ENCODE measurements at regions of chr17 and their contacts with region 1.

Region 1: DNA sequence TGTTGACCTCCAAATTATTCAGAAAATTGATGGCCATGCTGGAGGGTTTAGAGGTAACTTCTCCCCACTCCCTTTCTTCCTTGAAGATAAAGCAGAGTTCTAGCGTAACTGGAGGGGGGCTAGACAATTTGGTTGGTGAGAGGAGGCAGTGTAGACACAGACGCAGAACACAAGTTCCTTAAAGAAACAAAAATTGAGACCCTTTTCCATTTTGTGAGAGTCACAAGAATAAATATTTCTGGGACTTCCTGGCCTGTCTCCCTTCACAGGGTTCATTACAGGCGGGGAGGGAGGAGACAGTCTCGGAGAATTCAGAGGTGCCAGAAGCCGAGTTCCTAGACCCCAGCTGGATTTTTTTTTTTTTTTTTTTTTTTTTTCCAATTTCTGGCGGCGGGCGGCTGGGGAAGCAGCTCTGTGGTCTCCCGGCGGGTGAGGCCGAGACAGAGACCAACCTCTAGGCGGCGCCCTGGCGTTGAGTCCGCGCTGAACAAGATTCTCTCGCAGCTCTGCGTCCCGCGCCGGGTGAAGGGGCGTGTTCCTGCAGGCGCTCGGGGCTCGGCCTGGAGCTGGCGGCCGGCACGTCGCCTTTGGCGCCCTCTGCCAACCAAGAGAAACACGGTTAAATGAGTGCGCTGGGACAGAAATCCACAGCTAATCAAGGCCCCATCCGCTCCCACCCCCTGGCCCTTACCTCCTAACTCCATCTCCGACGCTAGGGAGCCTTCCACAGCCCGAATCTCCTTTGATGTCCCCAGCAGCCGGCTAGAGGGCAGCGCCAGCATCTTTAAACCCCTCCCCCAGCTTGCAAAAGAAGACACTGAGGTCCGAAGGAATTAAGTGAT is 10.2 kb upstream of the HOXB9 start:
- DNase-seq: peak; percentile 95 to 97
- ATAC-seq: peak; percentile 85 to 95
- H3K4me3 ChIP-seq: no peak overlapping the region
- H3K27ac ChIP-seq: peak overlapping the region; percentile 53 to 74
- H3K4me1 ChIP-seq: peaks cover 48% of the 10 kb centered on the region
- CTCF ChIP-seq: peak; percentile 93
- EP300 ChIP-seq: no peak
- POLR2A ChIP-seq: no peak
- RAD21 ChIP-seq: peak; percentile 41 to 49; a peak in 4 of 5 replicates

Region 2: DNA sequence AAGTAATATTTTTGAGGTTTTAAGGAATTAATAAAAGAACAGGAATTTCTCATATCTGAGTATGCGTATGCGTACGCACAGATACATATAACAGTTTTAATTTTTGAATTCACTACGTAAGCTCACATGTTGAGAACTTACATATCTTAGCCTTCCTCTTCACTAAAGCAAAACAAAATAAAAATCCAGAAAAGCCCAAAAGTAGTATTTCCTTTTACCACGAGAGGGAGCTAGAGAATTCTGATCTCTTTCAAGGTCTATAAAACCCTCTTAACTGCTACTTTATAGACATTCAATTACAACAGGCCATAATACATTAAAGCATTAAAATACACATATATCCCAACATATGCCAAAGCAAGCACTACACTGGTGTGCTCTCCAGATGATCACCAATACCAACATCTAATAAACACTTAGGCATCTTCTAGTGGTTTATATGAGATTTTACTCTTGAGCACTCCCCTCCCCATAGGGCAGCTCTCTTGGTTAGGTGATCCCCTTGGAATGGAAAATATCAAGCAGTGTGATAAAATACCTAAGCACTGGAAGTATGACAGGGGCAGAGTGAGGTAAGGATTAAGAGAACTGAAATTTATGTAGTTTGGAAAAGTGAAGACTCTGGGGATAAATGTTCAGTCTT is 300.4 kb before region 1 on chr17:
- CTCF ChIA-PET with region 1: interaction called, 10 read pairs
- POLR2A ChIA-PET with region 1: no interaction called
- DNase-seq: peak; percentile 35 to 68
- ATAC-seq: peak; percentile 71 to 74; a peak in 5 of 6 replicates
- H3K4me3 ChIP-seq: no peak overlapping the region
- H3K27ac ChIP-seq: no peak overlapping the region
- H3K4me1 ChIP-seq: peaks cover 17% of the 10 kb centered on the region
- CTCF ChIP-seq: peak; percentile 94
- EP300 ChIP-seq: no peak
- POLR2A ChIP-seq: no peak
- RAD21 ChIP-seq: peak; percentile 75 to 79

Region 3: GRCh38 chr17:48457080-48457836 is 179.1 kb before region 1 on chr17:
- CTCF ChIA-PET with region 1: no interaction called
- POLR2A ChIA-PET with region 1: no interaction called
- DNase-seq: peak; percentile 69 to 75
- ATAC-seq: peak; percentile 84 to 97
- H3K4me3 ChIP-seq: peak overlapping the region; percentile 30; the same call in 2 of the 3 replicates
- H3K27ac ChIP-seq: no peak overlapping the region
- H3K4me1 ChIP-seq: peaks cover 8% of the 10 kb centered on the region; the same call in 2 of the 3 replicates
- CTCF ChIP-seq: peak; percentile 97
- EP300 ChIP-seq: no peak
- POLR2A ChIP-seq: no peak
- RAD21 ChIP-seq: peak; percentile 69 to 75

Region 4: GRCh38 chr17:48492401-48493298 is 143.7 kb before region 1 on chr17:
- CTCF ChIA-PET with region 1: no interaction called
- POLR2A ChIA-PET with region 1: no interaction called
- DNase-seq: peak; percentile 66 to 85
- ATAC-seq: peak; percentile 96 to 98
- H3K4me3 ChIP-seq: peak overlapping the region; percentile 25
- H3K27ac ChIP-seq: peak overlapping the region; percentile 43 to 72
- H3K4me1 ChIP-seq: peaks cover 14% of the 10 kb centered on the region; the same call in 2 of the 3 replicates
- CTCF ChIP-seq: peak; percentile 92
- EP300 ChIP-seq: no peak
- POLR2A ChIP-seq: no peak
- RAD21 ChIP-seq: peak; percentile 83 to 96

Region 5: GRCh38 chr17:48528153-48528935 is 108.1 kb before region 1 on chr17:
- CTCF ChIA-PET with region 1: no interaction called
- POLR2A ChIA-PET with region 1: no interaction called
- DNase-seq: no peak
- ATAC-seq: no peak
- H3K4me3 ChIP-seq: no peak overlapping the region
- H3K27ac ChIP-seq: no peak overlapping the region
- H3K4me1 ChIP-seq: peaks cover 2% of the 10 kb centered on the region
- CTCF ChIP-seq: no peak
- EP300 ChIP-seq: no peak
- POLR2A ChIP-seq: no peak
- RAD21 ChIP-seq: no peak

Region 6: DNA sequence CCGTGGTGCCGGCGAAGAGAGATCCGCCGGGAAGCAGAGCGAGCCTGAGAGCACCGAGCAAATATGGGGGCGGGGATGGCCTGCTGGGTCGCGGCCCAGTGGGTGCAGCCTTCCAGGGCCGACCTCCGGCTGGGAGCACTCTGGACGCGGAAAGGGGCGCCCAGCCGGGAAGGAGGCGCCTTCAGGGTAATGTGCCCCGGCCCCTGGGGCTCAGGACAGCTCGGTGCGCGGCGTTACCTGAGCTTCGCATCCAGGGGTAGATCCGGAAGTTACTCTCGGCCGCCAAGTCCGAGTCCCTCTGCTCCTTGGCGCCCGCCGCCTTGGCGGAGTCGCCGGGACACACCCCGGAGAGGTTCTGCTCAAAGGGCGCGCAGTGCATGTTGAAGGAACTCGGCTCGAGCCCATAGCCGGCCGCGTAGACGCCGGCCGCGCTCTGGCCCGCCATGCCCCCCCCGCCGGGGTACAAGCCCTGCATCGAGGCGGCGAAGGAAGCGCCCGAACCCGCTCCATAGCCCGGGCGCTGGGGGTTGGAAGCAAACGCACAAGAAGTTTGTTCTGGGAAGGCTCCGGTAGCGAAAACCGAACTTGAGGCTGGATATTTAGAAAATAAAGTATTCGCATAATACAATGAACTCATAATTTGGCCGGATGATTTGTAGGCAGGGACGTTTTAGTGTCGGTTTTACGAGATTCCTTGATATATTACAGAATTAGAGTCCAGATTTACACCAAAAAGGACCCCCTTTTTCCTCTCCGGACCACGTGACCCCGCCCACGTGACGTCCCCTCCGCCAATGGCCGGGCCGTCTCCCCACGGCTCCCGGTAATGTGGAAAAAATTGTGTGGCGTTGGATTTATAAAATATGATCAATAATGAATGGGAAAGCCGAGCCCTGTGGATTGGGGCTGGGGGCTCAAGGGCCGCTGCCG is 25.9 kb before region 1 on chr17 and contains the start of gene HOXB7:
- CTCF ChIA-PET with region 1: interaction called, 22 read pairs
- POLR2A ChIA-PET with region 1: interaction called, 6 read pairs
- DNase-seq: peak; percentile 75 to 91
- ATAC-seq: peak; percentile 11 to 59; a peak in 3 of 6 replicates
- H3K4me3 ChIP-seq: peak within 1 kb of the TSS; percentile 74
- H3K27ac ChIP-seq: peak within 1 kb of the TSS; percentile 93 to 99
- H3K4me1 ChIP-seq: peaks cover 16% of the 10 kb centered on the region
- CTCF ChIP-seq: no peak
- EP300 ChIP-seq: no peak
- POLR2A ChIP-seq: peak; percentile 66
- RAD21 ChIP-seq: no peak
- polyA plus RNA-seq, gene HOXB7: 15.4 and 22.3 TPM in 2 replicates

Region 7: GRCh38 chr17:48625495-48626244 is 10.7 kb before region 1 on chr17:
- CTCF ChIA-PET with region 1: interaction called, 118 read pairs
- POLR2A ChIA-PET with region 1: interaction called, 45 read pairs
- DNase-seq: peak; percentile 66 to 84
- ATAC-seq: peak; percentile 66 to 82
- H3K4me3 ChIP-seq: peak overlapping the region; percentile 72
- H3K27ac ChIP-seq: peak overlapping the region; percentile 89 to 95
- H3K4me1 ChIP-seq: peaks cover 15% of the 10 kb centered on the region; the same call in 2 of the 3 replicates
- CTCF ChIP-seq: no peak
- EP300 ChIP-seq: peak in 1 of 2 experiments; percentile 9; a peak in 1 of 5 replicates
- POLR2A ChIP-seq: peak; percentile 45
- RAD21 ChIP-seq: no peak

Region 8: DNA sequence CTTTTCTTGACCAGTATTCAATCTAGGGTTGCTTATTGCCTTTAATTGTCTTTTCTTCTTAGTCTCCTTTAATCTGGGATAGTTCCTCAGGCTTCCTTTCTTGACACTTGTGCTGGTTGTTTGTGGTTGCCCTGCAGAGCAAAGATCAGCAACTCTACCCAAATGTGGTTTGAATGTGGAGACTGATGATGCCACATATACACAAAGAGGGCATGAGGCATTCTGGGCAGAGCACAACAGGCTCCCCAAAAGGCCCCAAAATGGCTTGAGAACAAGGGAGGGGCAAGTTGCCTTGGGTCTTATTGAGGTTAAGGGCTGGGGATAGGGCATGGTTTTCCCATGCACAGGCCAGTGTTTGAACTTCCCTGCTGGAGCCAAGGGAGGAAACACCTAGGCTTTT is 19.5 kb after region 1 on chr17:
- CTCF ChIA-PET with region 1: interaction called, 37 read pairs
- POLR2A ChIA-PET with region 1: interaction called, 4 read pairs
- DNase-seq: no peak
- ATAC-seq: no peak
- H3K4me3 ChIP-seq: no peak overlapping the region
- H3K27ac ChIP-seq: no peak overlapping the region
- H3K4me1 ChIP-seq: no peaks in the 10 kb centered on the region
- CTCF ChIP-seq: no peak
- EP300 ChIP-seq: no peak
- POLR2A ChIP-seq: no peak
- RAD21 ChIP-seq: no peak

Region 9: DNA sequence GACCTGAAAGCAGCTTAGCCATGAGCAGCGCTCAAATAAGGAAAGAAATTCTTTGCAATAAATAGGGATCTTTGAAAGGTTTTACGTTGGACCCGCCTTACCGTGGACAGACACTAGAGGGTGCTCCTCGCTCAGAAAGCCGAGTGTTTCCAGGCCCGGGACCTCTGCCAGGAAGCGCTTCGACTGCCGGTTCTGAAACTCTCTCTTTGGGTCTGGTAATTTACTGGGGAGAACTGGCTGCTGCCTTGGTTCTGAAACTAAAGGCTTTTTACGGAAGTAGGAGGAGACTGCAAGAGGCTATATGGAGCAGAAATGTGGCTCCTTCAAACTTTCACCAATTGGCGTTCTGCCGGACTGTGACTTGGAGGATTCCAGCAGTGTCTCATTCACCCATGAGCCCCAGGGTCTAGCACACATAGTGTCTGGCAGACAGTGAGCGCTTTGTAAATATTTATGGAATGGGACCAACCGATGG is 35.3 kb after region 1 on chr17:
- CTCF ChIA-PET with region 1: interaction called, 28 read pairs
- POLR2A ChIA-PET with region 1: interaction called, 5 read pairs
- DNase-seq: peak; percentile 72 to 79
- ATAC-seq: peak; percentile 81 to 86
- H3K4me3 ChIP-seq: peak overlapping the region; percentile 10; the same call in 2 of the 3 replicates
- H3K27ac ChIP-seq: peak overlapping the region; percentile 29 to 69
- H3K4me1 ChIP-seq: peaks cover 3% of the 10 kb centered on the region; the same call in 1 of the 3 replicates
- CTCF ChIP-seq: peak; percentile 91
- EP300 ChIP-seq: no peak
- POLR2A ChIP-seq: no peak
- RAD21 ChIP-seq: peak; percentile 90 to 93

Region 10: GRCh38 chr17:48753794-48754499 is 117.5 kb after region 1 on chr17:
- CTCF ChIA-PET with region 1: no interaction called
- POLR2A ChIA-PET with region 1: no interaction called
- DNase-seq: no peak
- ATAC-seq: peak in 1 of 2 experiments; percentile 39; a peak in 3 of 6 replicates
- H3K4me3 ChIP-seq: no peak overlapping the region
- H3K27ac ChIP-seq: peak overlapping the region in 1 of 2 experiments; percentile 65; a peak in 3 of 6 replicates
- H3K4me1 ChIP-seq: peaks cover 42% of the 10 kb centered on the region
- CTCF ChIP-seq: no peak
- EP300 ChIP-seq: no peak
- POLR2A ChIP-seq: no peak
- RAD21 ChIP-seq: no peak

Region 11: DNA sequence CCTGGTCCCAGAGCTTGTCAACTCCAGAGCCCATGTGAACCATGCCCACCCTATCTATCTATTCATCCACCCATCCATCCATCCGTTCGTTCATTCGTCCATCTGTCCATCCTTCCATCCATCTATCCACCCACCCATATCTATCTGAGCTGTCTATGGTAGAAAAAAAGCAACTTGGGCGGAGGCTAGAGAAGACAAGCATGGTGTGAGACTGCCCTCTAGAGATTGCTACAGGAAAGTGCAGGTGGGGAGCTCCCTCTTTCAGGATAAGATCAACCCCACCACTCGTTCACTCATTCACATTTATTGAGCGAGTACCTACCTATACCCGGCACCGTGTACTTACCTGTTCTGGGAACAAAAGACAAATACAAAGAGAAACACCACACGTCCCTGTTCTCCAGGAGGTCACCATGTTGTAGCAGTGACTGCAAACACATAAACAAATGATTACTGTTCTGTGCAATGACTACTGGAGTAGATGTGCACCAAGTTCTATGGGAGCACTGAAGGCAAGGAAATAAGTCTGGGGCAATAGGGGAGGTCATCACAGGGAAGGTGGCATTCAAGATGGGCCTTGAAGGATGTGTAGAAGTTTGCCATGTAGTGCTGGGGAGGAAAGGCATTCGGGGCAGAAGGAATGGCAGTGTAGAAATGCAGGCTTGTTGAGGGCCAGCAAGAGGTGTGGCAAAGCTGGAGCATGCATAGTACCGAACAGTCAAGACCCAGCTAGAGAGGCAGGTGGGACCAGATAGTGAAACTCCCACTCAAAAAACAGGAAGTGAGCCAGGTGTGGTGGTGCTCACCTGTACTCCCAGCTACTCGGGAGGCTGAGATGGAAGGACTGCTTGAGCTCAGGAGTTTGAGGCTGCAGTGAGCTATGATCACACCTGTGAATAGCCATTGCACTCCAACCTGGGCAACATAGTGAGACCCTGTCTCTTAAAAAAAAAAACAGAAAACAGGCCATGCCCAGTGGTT is 242.8 kb after region 1 on chr17:
- CTCF ChIA-PET with region 1: interaction called, 11 read pairs
- POLR2A ChIA-PET with region 1: no interaction called
- DNase-seq: peak; percentile 85 to 94
- ATAC-seq: peak; percentile 86 to 88
- H3K4me3 ChIP-seq: no peak overlapping the region
- H3K27ac ChIP-seq: no peak overlapping the region
- H3K4me1 ChIP-seq: peaks cover 15% of the 10 kb centered on the region
- CTCF ChIP-seq: peak; percentile 99
- EP300 ChIP-seq: no peak
- POLR2A ChIP-seq: no peak
- RAD21 ChIP-seq: peak; percentile 99 to 100

Measured in A549 (cell line).